ENCODE measurements at regions of chr20 and their contacts with region 1.

Region 1: GRCh38 chr20:57991211-57991881 is 237.1 kb downstream of the ANKRD60 start:
- DNase-seq: peak; percentile 99
- H3K4me3 ChIP-seq: no peak overlapping the region
- H3K27ac ChIP-seq: peak overlapping the region; percentile 94
- H3K4me1 ChIP-seq: peaks cover 49% of the 10 kb centered on the region
- H3K27me3 ChIP-seq: no peaks in the 10 kb centered on the region
- CTCF ChIP-seq: no peak

Region 2: GRCh38 chr20:57693002-57693640 is 298.2 kb before region 1 on chr20:
- CTCF ChIA-PET with region 1: no interaction called
- dilution Hi-C with region 1: no loop called
- in situ Hi-C with region 1: no loop called
- intact Hi-C with region 1: loop called (anchors 1 kb)
- DNase-seq: peak; percentile 99
- H3K4me3 ChIP-seq: no peak overlapping the region
- H3K27ac ChIP-seq: peak overlapping the region; percentile 88
- H3K4me1 ChIP-seq: peaks cover 93% of the 10 kb centered on the region
- H3K27me3 ChIP-seq: no peaks in the 10 kb centered on the region
- CTCF ChIP-seq: peak; percentile 49 to 69

Region 3: DNA sequence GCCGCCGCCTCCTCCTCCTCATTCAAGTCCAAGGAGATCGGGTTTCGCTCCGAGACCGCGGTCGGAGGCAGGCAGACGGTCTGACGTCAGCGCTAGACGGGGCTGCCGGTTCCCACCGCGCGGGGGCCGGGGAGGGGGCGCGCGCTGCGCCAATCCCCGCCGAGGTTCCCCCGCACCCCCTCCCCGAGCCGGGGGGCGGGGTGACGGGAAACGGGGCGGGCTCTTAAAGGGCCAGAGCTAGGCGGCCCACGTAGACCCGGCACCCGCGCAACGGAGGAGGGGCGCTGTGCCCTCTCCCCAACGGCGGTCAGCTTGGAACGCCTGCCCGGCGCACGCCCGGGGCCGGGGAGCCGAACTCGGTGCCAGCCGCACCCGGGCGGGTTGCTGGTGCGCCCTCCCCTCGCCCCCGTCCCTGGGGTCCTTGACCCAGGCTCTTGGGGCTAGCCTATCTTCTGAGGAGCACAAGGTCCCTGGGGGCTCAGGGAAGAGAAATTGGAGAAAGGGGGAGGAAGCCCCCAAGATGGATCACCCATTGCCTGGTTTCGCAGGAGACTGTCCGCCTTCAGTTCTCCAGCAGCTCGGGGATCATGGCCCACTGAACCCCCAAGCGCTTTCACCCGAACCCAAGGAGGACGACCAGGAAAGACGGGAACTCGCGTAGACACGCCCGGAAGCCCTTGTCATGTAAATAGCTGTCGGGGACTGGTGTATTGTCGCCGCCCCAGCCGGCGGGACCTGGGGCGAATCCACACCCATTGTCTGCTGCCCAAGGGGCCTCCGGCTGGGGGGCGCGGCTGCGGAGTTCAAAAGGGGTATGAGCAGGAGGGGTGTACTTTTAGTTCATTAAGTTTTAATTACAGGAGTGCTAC is 281.2 kb before region 1 on chr20 and contains the start of gene PMEPA1:
- CTCF ChIA-PET with region 1: no interaction called
- dilution Hi-C with region 1: no loop called
- in situ Hi-C with region 1: no loop called
- intact Hi-C with region 1: loop called (anchors 2 kb)
- DNase-seq: peak; percentile 97
- H3K4me3 ChIP-seq: peak within 1 kb of the TSS; percentile 85 to 94 (median 92)
- H3K27ac ChIP-seq: peak within 1 kb of the TSS; percentile 91
- H3K4me1 ChIP-seq: peaks cover 54% of the 10 kb centered on the region
- H3K27me3 ChIP-seq: no peaks in the 10 kb centered on the region
- CTCF ChIP-seq: no peak
- total RNA-seq, gene PMEPA1: 100 to 108 TPM

Region 4: GRCh38 chr20:57718490-57719271 is 272.7 kb before region 1 on chr20:
- CTCF ChIA-PET with region 1: no interaction called
- dilution Hi-C with region 1: no loop called
- in situ Hi-C with region 1: no loop called
- intact Hi-C with region 1: loop called (anchors 1 kb)
- DNase-seq: peak; percentile 97
- H3K4me3 ChIP-seq: peak overlapping the region; percentile 41 to 56 (median 49)
- H3K27ac ChIP-seq: no peak overlapping the region
- H3K4me1 ChIP-seq: peaks cover 45% of the 10 kb centered on the region
- H3K27me3 ChIP-seq: no peaks in the 10 kb centered on the region
- CTCF ChIP-seq: no peak

Region 5: DNA sequence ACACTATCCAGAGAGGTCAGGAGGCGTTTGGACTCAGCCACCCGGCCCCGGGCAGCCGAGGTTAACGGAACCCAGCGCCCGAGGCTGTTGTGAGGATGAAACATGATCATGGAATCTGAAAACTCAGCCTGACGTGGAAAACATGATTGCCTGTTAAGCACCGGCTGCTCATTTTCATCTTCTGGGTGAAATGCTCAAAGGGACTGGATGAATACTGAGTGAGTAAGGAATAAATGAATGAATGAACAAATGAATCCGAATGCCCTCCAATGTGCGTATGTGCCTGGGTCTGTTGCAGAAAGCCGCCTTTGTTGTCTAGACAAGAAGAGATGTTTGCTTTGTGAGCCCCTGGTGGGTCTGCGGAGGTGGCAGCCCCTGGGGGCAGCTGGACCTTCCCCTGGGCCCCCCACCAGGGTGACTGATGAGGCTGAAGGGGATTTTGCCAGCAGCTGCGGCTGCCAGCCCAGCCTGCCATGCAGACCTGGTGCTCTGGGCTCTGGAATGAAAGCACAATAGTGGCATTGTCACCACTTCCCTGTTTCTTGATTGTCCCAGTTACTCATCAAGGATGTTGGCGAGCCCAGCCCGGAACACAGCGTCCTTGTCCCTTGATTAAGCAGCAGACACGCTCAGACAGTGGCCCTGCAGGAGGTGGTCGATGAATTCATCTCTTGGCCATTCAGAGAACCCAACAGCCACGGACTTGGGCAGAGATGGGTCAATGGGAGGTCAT is 26.1 kb after region 1 on chr20:
- CTCF ChIA-PET with region 1: no interaction called
- dilution Hi-C with region 1: no loop called
- in situ Hi-C with region 1: no loop called
- intact Hi-C with region 1: loop called (anchors 1 kb)
- DNase-seq: peak; percentile 95
- H3K4me3 ChIP-seq: peak overlapping the region in 1 of 3 experiments; percentile 2
- H3K27ac ChIP-seq: peak overlapping the region; percentile 91
- H3K4me1 ChIP-seq: peaks cover 42% of the 10 kb centered on the region
- H3K27me3 ChIP-seq: no peaks in the 10 kb centered on the region
- CTCF ChIP-seq: no peak

Region 6: GRCh38 chr20:58028123-58028522 is 36.8 kb after region 1 on chr20:
- CTCF ChIA-PET with region 1: no interaction called
- dilution Hi-C with region 1: no loop called
- in situ Hi-C with region 1: no loop called
- intact Hi-C with region 1: no loop called
- DNase-seq: no peak
- H3K4me3 ChIP-seq: no peak overlapping the region
- H3K27ac ChIP-seq: no peak overlapping the region
- H3K4me1 ChIP-seq: no peaks in the 10 kb centered on the region
- H3K27me3 ChIP-seq: no peaks in the 10 kb centered on the region
- CTCF ChIP-seq: peak; percentile 16 to 58

Region 7: GRCh38 chr20:58065508-58066361 is 74.4 kb after region 1 on chr20:
- CTCF ChIA-PET with region 1: no interaction called
- dilution Hi-C with region 1: no loop called
- in situ Hi-C with region 1: no loop called
- intact Hi-C with region 1: loop called (anchors 5 kb)
- DNase-seq: peak; percentile 90
- H3K4me3 ChIP-seq: no peak overlapping the region
- H3K27ac ChIP-seq: peak overlapping the region; percentile 53
- H3K4me1 ChIP-seq: peaks cover 22% of the 10 kb centered on the region
- H3K27me3 ChIP-seq: no peaks in the 10 kb centered on the region
- CTCF ChIP-seq: no peak

Region 8: DNA sequence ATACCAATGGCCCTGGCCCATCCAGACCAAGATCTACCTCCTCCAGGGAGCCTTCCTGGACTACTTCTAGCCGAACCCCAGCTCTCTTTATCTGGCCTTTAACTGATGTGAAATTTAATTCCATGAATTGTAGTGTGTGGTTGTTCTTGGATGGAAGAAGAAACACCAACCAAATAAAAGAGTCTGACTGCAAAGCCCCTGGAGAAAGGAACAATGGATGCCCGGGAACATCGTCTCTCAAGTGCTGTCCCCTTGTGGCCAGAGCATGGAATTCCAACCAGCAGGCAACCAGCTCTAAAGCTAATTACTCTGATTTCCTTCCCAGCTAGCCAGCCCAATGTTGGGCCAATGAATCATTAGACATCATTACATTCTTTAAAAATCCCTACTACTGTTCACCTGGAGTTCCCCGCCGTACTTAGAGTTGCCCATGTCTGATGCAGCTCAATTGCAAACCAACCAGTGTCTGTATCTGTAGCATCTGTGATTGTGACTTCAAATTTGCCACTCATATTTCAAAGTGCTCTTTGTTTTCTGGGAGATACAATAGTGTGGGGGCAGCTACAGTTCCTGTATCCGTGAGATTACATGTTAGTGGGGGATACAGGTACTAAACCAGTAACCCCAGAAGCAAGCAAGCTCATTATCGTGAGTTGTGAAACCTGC is 96.0 kb after region 1 on chr20:
- CTCF ChIA-PET with region 1: no interaction called
- dilution Hi-C with region 1: no loop called
- in situ Hi-C with region 1: no loop called
- intact Hi-C with region 1: loop called (anchors 1 kb)
- DNase-seq: peak; percentile 76
- H3K4me3 ChIP-seq: no peak overlapping the region
- H3K27ac ChIP-seq: no peak overlapping the region
- H3K4me1 ChIP-seq: peaks cover 15% of the 10 kb centered on the region
- H3K27me3 ChIP-seq: no peaks in the 10 kb centered on the region
- CTCF ChIP-seq: peak; percentile 96 to 99

Region 9: DNA sequence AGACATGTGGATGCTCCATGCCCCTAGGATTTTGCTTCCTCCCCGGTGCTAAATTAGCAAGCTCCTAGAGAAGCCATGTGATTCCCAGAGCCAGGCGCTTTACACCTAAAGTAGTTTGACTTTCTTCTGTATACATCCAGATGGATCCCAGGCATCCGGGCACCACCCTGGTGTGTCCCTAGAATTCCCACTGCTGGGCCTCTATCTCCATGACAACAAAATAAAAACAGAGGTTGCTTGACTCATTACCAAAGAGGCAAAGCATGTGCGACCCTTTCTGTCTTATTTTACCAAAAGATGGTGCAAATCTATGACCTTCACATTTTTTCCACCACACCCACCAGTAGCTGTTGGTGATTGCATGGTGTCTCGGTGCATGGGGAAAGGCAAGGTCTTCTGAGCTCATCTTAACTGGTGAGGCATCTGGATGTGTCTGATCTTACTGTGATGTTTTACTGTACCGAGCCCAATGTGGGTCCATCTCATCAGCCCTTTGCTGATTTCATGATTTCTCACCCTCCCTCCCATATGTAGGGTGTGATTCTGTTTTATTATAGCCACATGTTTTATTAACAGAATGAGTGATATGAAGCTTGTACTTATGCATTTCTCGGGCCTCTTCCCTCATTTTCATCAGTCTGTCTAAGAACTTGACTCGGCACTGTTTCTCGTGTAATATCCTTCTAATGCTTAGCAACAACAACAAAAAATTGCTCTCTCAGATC is 370.3 kb after region 1 on chr20:
- CTCF ChIA-PET with region 1: no interaction called
- dilution Hi-C with region 1: no loop called
- in situ Hi-C with region 1: no loop called
- intact Hi-C with region 1: no loop called
- DNase-seq: no peak
- H3K4me3 ChIP-seq: no peak overlapping the region
- H3K27ac ChIP-seq: no peak overlapping the region
- H3K4me1 ChIP-seq: no peaks in the 10 kb centered on the region
- H3K27me3 ChIP-seq: no peaks in the 10 kb centered on the region
- CTCF ChIP-seq: no peak